Aorta (tissue), 5 donors: ENCODE measurements at regions of chr6 and their contacts with region 1.

Region 1: DNA sequence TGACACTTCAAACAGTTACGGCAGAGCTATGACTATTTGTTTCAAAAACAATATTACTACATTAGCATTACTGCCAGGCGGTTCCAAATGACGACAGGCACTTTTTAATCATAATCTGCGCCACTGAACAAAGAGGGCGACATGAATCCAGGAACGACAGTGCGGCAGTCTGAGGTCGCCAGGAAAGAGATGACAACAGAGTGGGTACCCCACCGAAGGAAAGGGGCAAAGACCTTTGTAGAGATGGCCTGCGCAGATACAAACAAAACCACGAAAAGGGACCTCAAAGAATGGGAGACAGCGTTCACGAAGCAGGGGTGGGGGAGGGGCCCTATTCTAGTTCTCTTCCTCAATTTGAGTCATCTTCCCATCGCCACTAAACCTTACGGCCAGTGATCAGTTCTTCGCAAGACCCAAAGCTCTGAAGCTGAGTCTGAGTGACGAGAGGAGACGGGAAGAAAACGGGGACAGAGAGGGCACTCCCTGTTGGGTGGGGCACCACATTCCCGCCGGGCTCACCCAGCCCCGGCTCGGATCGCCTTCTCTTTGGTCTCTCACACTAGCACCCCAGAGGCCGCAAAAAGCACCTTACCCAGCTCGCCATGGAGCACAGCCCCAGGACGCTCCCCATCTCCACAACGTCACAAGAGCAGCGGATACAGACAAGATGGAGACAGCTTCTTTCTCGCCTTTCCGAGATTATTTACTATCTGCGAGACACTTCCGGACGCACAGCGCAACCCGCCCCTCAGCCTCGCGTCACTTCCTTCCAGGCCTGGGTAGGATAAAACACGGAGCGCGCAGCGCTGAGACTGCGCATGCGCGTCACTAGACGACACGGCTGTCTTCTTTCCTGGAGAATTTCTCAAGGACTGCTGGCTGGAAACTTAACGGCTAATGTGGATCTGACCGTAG is at the start of gene SERINC1:
- DNase-seq: peak; percentile 97 to 98
- ATAC-seq: peak; percentile 99
- H3K4me3 ChIP-seq: peak within 1 kb of the TSS; percentile 91
- H3K27ac ChIP-seq: peak within 1 kb of the TSS; percentile 81 to 95
- H3K4me1 ChIP-seq: no peaks in the 10 kb centered on the region
- H3K27me3 ChIP-seq: no peaks in the 10 kb centered on the region
- total RNA-seq, gene SERINC1: 264 to 274 TPM

Region 2: GRCh38 chr6:121627761-121628160 is 843.6 kb before region 1 on chr6:
- intact Hi-C with region 1: no loop called
- DNase-seq: no peak
- ATAC-seq: no peak
- H3K4me3 ChIP-seq: no peak overlapping the region
- H3K27ac ChIP-seq: no peak overlapping the region
- H3K4me1 ChIP-seq: no peaks in the 10 kb centered on the region
- H3K27me3 ChIP-seq: no peaks in the 10 kb centered on the region

Region 3: DNA sequence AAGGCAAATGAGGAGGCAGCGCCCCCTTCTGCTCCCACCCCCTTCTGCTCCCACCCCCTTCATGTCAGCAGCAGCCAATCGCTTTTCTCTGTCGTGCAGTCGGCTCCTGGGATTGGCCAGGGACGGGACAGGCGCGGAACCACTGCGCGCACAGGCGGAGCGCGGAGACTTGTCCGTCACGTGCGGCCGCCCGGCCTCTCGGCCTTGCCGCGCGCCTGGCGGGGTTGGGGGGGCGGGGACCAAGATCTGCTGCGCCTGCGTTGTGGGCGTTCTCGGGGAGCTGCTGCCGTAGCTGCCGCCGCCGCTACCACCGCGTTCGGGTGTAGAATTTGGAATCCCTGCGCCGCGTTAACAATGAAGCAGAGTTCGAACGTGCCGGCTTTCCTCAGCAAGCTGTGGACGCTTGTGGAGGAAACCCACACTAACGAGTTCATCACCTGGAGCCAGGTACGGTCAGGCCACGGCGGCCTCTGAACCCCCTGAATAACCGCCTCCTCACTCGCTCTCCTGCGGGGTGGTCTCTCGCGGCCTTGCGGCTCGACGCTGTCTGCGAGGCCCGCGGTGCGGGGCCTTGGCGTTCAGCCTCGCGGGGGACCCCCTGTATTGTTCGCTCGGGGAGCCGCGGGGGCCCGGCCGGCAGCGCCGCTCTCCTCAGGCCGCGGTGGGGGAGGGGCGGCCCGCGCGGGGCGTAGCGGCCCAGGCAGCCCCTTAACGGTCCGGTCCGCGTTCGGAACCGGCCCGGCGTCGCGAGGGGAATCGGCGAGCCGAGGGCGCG is 71.8 kb before region 1 on chr6 and contains the start of gene HSF2:
- intact Hi-C with region 1: loop called in 1 of 2 experiments (anchors 5 kb)
- DNase-seq: peak; percentile 98
- ATAC-seq: peak; percentile 99
- H3K4me3 ChIP-seq: peak within 1 kb of the TSS; percentile 63 to 93
- H3K27ac ChIP-seq: peak within 1 kb of the TSS in 1 of 2 donors; percentile 73
- H3K4me1 ChIP-seq: peaks cover 0 to 4% of the 10 kb centered on the region in 2 donors
- H3K27me3 ChIP-seq: no peaks in the 10 kb centered on the region
- total RNA-seq, gene HSF2: 11.4 to 13.9 TPM

Region 4: GRCh38 chr6:122553697-122554096 is 82.3 kb after region 1 on chr6:
- intact Hi-C with region 1: no loop called
- DNase-seq: no peak
- ATAC-seq: no peak
- H3K4me3 ChIP-seq: no peak overlapping the region
- H3K27ac ChIP-seq: no peak overlapping the region
- H3K4me1 ChIP-seq: no peaks in the 10 kb centered on the region
- H3K27me3 ChIP-seq: peaks cover 0 to 1% of the 10 kb centered on the region in 2 donors